ENCODE measurements at regions of chr2 and their contacts with region 1.

Region 1: DNA sequence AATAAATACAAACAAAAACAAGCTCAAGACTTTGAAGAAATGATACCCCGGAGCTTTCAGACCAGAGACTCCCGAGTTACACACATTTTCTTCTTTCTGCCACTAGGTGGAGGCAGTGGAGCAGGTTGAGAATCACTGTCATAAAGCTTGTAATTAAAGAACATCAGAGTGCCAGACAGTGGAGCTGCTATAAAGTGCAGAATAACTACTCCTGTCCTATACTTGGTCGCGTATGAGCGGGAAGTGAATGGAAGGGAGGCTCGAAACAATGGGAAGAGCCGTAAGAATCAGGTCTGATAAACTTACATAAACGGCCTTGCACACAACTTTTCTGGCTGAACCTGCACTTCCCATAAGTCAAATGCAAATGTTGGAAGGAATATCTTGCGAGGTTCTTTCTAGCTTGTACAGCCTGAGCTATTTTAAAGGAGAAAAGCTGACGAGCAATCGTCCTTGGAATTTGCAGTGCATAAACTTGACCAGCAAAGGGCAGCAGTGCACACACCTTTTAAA is 189.0 kb downstream of the RPIA start:
- DNase-seq: peak; percentile 44
- H3K4me3 Mint-ChIP-seq: no peak overlapping the region
- H3K27ac Mint-ChIP-seq: no peak overlapping the region
- H3K4me1 Mint-ChIP-seq: no peaks in the 10 kb centered on the region
- H3K27me3 Mint-ChIP-seq: peaks cover 14% of the 10 kb centered on the region

Region 2: DNA sequence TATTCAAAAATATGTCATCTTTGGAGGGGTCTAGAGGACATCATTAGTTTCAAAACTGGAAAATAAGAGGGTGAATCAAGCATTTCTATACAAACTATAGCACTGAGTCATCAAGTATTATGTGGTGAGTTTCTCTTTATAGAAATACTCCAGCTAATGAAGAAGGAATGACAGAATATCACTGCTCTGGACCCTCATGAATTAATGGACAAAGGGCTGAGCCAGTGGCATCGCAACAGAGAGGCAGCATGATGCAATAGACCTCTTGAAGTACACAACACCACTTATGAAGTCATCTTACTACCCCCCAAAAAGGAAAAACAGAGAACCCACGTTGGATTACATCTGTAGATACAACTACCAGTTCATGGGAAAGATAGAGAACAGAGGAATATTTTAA is 225.8 kb before region 1 on chr2:
- CTCF ChIA-PET with region 1: no interaction called
- DNase-seq: no peak
- H3K4me3 Mint-ChIP-seq: no peak overlapping the region
- H3K27ac Mint-ChIP-seq: no peak overlapping the region
- H3K4me1 Mint-ChIP-seq: no peaks in the 10 kb centered on the region
- H3K27me3 Mint-ChIP-seq: no peaks in the 10 kb centered on the region

Region 3: GRCh38 chr2:88855620-88856408 is 24.7 kb before region 1 on chr2:
- CTCF ChIA-PET with region 1: no interaction called
- DNase-seq: no peak
- H3K4me3 Mint-ChIP-seq: no peak overlapping the region
- H3K27ac Mint-ChIP-seq: no peak overlapping the region
- H3K4me1 Mint-ChIP-seq: no peaks in the 10 kb centered on the region
- H3K27me3 Mint-ChIP-seq: peaks cover 14% of the 10 kb centered on the region

Region 4: DNA sequence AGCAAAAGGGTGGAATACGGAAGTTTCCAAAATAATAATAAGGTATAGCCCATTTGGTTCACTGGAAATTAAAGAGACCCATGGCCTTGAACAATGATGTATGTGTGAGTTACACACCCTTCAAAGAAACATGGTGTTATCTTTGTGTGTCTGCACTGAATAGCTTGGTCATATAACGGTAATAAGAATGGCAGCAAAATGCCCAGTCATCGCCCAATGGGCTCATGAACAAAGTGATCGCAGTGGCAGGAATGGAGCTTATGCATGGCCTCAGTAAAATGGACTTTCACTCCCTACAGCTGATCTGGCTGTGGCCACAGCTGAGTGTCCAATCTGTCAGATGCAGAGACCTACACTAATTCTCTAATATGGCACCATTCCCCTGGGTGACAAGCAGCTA is 12.3 kb after region 1 on chr2:
- CTCF ChIA-PET with region 1: interaction called, 16 read pairs
- DNase-seq: no peak
- H3K4me3 Mint-ChIP-seq: no peak overlapping the region
- H3K27ac Mint-ChIP-seq: no peak overlapping the region
- H3K4me1 Mint-ChIP-seq: no peaks in the 10 kb centered on the region
- H3K27me3 Mint-ChIP-seq: peaks cover 6% of the 10 kb centered on the region